Calu3 (cell line): ENCODE measurements at regions of chr2 and their contacts with region 1.

Region 1: DNA sequence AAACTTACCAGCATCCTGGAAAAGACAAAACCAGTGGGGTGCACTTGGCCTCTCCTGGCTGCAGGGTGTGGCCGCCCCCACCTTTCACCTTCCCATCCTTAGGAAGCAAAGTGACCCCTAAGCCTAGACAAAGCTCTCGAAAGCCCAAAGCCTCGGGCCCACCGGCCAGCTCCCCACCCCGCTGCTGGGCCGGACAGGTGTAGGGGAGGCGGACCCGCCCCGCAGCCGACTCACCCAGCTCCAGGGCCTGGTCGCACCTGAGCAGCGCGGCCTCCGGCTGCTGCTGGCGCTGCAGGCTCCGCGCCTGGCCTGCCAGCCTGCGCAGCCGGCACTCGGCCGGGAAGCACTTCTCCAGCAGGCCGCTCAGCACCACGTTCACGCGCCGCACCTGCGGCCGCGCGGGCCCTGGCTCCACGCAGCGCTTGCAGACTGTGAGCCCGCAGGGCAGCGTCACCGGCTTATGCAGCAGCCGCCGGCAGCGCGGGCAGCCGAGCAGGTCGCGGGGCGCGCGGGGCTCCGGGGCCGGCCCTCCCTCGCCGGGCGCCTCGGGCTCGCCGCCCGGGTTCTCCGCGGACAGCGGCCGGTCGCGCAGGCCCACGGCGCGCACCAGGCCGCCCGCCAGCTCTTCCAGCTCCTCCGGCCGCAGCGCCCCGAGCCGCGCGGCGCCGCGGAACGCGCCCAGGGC is 978 bp downstream of the LONRF2 start:
- DNase-seq: peak; percentile 82
- H3K4me3 Mint-ChIP-seq: peak overlapping the region; percentile 80
- H3K27ac Mint-ChIP-seq: no peak overlapping the region
- H3K4me1 Mint-ChIP-seq: peaks cover 9% of the 10 kb centered on the region
- H3K27me3 Mint-ChIP-seq: no peaks in the 10 kb centered on the region
- CTCF ChIP-seq: peak; percentile 37

Region 2: GRCh38 chr2:99514357-99514756 is 807.0 kb before region 1 on chr2:
- CTCF ChIA-PET with region 1: no interaction called
- intact Hi-C with region 1: no loop called
- DNase-seq: no peak
- H3K4me3 Mint-ChIP-seq: no peak overlapping the region
- H3K27ac Mint-ChIP-seq: no peak overlapping the region
- H3K4me1 Mint-ChIP-seq: no peaks in the 10 kb centered on the region
- H3K27me3 Mint-ChIP-seq: peaks cover 61% of the 10 kb centered on the region
- CTCF ChIP-seq: no peak

Region 3: DNA sequence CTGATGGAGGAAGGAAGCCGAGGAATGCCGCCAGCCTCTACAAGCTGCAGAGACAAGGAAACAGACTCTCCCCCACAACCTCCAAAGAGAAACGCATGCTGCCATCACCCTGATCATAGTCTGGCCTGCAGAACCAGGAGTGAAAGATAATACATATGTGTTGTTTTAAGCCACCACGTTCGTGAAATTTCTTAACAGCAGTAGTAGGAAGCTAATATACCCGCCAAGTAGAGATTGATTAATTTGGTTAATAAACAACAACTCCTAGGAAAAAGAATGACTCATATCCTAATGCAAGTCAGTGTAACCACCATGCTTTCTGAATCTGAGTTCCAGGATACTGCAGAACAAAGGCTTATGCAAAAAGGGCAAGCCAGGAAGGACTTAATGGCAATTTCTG is 35.6 kb before region 1 on chr2:
- CTCF ChIA-PET with region 1: interaction called, 13 read pairs
- intact Hi-C with region 1: loop called (anchors 5 kb)
- DNase-seq: peak; percentile 45
- H3K4me3 Mint-ChIP-seq: peak overlapping the region; percentile 27
- H3K27ac Mint-ChIP-seq: peak overlapping the region; percentile 98
- H3K4me1 Mint-ChIP-seq: peaks cover 35% of the 10 kb centered on the region
- H3K27me3 Mint-ChIP-seq: no peaks in the 10 kb centered on the region
- CTCF ChIP-seq: no peak

Region 4: GRCh38 chr2:100291120-100291970 is 30.0 kb before region 1 on chr2:
- CTCF ChIA-PET with region 1: interaction called, 13 read pairs
- intact Hi-C with region 1: loop called (anchors 5 kb)
- DNase-seq: peak; percentile 85
- H3K4me3 Mint-ChIP-seq: no peak overlapping the region
- H3K27ac Mint-ChIP-seq: no peak overlapping the region
- H3K4me1 Mint-ChIP-seq: peaks cover 5% of the 10 kb centered on the region
- H3K27me3 Mint-ChIP-seq: no peaks in the 10 kb centered on the region
- CTCF ChIP-seq: no peak

Region 5: DNA sequence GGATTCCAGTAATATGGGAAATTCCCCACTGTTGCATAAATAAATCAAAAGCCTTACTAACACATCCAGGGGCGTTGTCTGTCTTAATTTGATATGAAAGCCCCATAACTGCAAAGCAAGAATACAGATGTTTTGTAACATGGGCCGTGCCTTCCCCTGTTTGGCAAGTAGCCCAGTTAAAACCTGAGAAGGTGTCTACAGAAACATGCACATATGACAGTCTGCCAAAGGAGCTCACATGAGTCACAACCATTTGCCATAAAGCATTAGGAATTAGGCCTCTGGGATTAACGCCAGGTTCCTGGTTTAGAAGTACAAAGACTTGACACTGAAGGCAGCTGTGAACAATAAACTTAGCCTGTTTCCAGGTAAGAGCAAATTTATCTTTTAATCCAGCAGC is 44.1 kb after region 1 on chr2:
- CTCF ChIA-PET with region 1: no interaction called
- intact Hi-C with region 1: loop called (anchors 5 kb)
- DNase-seq: peak; percentile 82
- H3K4me3 Mint-ChIP-seq: no peak overlapping the region
- H3K27ac Mint-ChIP-seq: peak overlapping the region; percentile 54
- H3K4me1 Mint-ChIP-seq: peaks cover 18% of the 10 kb centered on the region
- H3K27me3 Mint-ChIP-seq: no peaks in the 10 kb centered on the region
- CTCF ChIP-seq: no peak

Region 6: DNA sequence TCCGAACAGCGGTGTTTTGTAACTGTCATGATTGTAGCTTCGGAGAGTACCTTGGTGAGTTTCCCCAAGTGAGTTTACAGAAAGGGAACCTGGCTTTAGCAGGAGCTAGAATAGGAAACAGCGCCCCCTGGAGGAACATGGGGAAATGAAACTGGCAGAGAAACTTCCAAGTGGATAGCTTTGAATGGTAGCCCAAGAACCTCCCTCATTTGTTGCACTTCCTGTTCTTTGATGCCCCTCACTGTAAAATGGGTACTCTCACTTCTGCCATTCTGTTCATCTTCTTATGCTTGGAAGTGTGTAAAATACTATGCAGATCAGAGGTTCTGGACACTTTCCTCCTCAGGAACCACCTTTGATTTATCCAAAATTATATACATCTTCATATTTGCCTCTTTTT is 59.9 kb after region 1 on chr2:
- CTCF ChIA-PET with region 1: interaction called, 8 read pairs
- intact Hi-C with region 1: loop called (anchors 1 kb)
- DNase-seq: peak; percentile 90
- H3K4me3 Mint-ChIP-seq: no peak overlapping the region
- H3K27ac Mint-ChIP-seq: no peak overlapping the region
- H3K4me1 Mint-ChIP-seq: no peaks in the 10 kb centered on the region
- H3K27me3 Mint-ChIP-seq: no peaks in the 10 kb centered on the region
- CTCF ChIP-seq: peak; percentile 84